CD4-positive, alpha-beta memory T cell (primary cell): ENCODE measurements at regions of chr2 and their contacts with region 1.

Region 1: DNA sequence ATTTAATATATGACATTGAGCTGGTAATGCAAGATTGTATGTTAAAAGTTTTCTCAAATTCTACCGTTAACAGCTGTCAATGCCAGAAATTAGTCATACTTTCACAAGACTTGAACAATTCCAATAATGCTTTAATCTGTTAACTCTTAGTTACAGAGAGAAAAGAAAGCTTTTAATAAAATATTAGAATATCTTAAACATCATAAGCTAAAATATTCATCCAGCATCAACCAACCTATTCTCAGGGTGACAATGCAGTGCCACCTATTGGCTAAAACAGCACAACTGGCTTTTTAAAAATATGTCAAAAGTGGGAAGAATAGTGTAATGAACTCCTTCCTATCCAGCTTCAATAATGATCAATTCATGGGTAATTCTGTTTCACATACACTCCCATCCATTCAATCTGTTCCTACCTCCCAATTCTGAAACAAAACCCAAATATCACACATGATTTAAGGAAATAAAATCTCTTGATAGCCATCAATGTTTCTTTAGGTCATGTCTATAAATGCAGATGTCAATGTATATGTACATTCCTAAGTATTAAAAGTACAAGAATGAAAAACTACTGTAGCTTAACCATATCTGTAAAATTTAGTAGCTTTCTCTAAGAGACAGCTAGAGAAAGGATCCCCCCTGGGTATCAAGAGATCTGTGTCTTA is 79.8 kb upstream of the CCDC141 start:
- DNase-seq: peak in 3 of 5 donors; percentile 11 to 13 (median 13)
- H3K4me3 ChIP-seq: no peak overlapping the region
- H3K4me3 Mint-ChIP-seq: no peak overlapping the region
- H3K27ac ChIP-seq: no peak overlapping the region
- H3K27ac Mint-ChIP-seq: peak overlapping the region in 1 of 7 donors; percentile 18
- H3K4me1 ChIP-seq: no peaks in the 10 kb centered on the region
- H3K4me1 Mint-ChIP-seq: no peaks in the 10 kb centered on the region
- H3K27me3 ChIP-seq: no peaks in the 10 kb centered on the region
- H3K27me3 Mint-ChIP-seq: no peaks in the 10 kb centered on the region

Region 2: DNA sequence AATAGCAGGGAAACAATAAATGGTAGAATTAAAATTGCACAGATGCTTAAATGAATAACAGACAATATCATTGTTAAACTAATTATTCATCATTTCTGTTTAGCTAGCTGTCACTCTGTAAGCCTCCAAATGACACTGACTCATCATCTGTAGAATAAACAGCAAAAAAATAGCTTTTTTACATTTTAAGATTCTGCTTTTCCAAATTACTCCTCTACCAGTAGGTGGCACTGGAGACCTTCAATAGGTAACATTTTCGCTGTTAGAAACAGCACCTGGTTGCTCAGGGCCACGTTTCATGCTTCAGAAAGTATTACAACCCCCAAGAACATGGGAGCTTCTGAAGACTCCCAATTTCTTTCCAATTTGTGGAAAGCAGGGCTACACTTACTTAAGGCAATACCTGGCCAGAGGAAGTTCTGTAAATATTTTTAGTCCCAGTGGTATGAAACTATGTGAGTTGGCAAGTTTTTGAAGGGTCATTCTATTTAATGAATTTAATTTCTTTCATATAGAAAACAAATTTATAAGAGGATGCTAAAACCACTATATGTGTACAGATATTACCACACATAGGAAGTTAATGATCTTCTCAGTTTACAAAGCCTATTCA is 367.8 kb before region 1 on chr2:
- CTCF ChIA-PET with region 1: interaction called, 10 read pairs
- POLR2A ChIA-PET with region 1: no interaction called
- intact Hi-C with region 1: no loop called
- DNase-seq: peak in 4 of 5 donors; percentile 20 to 31 (median 27)
- H3K4me3 ChIP-seq: no peak overlapping the region
- H3K4me3 Mint-ChIP-seq: no peak overlapping the region
- H3K27ac ChIP-seq: no peak overlapping the region
- H3K27ac Mint-ChIP-seq: no peak overlapping the region
- H3K4me1 ChIP-seq: no peaks in the 10 kb centered on the region
- H3K4me1 Mint-ChIP-seq: no peaks in the 10 kb centered on the region
- H3K27me3 ChIP-seq: no peaks in the 10 kb centered on the region
- H3K27me3 Mint-ChIP-seq: peaks cover 0 to 1% of the 10 kb centered on the region in 2 donors

Region 3: GRCh38 chr2:178796079-178796677 is 333.5 kb before region 1 on chr2:
- CTCF ChIA-PET with region 1: interaction called, 13 read pairs
- POLR2A ChIA-PET with region 1: no interaction called
- intact Hi-C with region 1: no loop called
- DNase-seq: peak in 4 of 5 donors; percentile 9 to 14 (median 12)
- H3K4me3 ChIP-seq: no peak overlapping the region
- H3K4me3 Mint-ChIP-seq: no peak overlapping the region
- H3K27ac ChIP-seq: no peak overlapping the region
- H3K27ac Mint-ChIP-seq: no peak overlapping the region
- H3K4me1 ChIP-seq: no peaks in the 10 kb centered on the region
- H3K4me1 Mint-ChIP-seq: no peaks in the 10 kb centered on the region
- H3K27me3 ChIP-seq: no peaks in the 10 kb centered on the region
- H3K27me3 Mint-ChIP-seq: peaks cover 0 to 3% of the 10 kb centered on the region in 2 donors

Region 4: GRCh38 chr2:178962805-178963433 is 166.8 kb before region 1 on chr2:
- CTCF ChIA-PET with region 1: interaction called, 5 read pairs
- POLR2A ChIA-PET with region 1: no interaction called
- intact Hi-C with region 1: loop called (anchors 2 kb)
- DNase-seq: no peak
- H3K4me3 ChIP-seq: no peak overlapping the region
- H3K4me3 Mint-ChIP-seq: no peak overlapping the region
- H3K27ac ChIP-seq: no peak overlapping the region
- H3K27ac Mint-ChIP-seq: no peak overlapping the region
- H3K4me1 ChIP-seq: no peaks in the 10 kb centered on the region
- H3K4me1 Mint-ChIP-seq: no peaks in the 10 kb centered on the region
- H3K27me3 ChIP-seq: no peaks in the 10 kb centered on the region
- H3K27me3 Mint-ChIP-seq: no peaks in the 10 kb centered on the region

Region 5: DNA sequence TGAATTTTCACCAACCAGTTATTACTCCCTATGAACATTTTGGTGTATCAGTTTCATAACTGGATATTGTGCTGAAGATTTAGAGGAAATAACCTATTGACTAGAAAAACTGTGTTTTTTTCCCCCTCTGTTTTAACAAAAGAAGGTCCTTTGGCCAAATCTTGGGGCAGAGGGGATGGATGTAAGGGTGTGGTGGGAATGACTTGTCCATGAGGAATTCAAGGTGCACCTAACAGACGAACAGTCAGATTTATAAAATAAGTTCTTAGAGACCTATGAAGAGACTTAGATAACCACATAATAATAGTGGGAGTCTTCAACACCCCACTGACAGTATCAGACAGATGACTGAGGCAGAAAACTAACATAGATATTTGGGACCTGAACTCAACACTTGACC is 254.3 kb after region 1 on chr2:
- CTCF ChIA-PET with region 1: no interaction called
- POLR2A ChIA-PET with region 1: no interaction called
- intact Hi-C with region 1: no loop called
- DNase-seq: no peak
- H3K4me3 ChIP-seq: no peak overlapping the region
- H3K4me3 Mint-ChIP-seq: no peak overlapping the region
- H3K27ac ChIP-seq: no peak overlapping the region
- H3K27ac Mint-ChIP-seq: no peak overlapping the region
- H3K4me1 ChIP-seq: no peaks in the 10 kb centered on the region
- H3K4me1 Mint-ChIP-seq: no peaks in the 10 kb centered on the region
- H3K27me3 ChIP-seq: no peaks in the 10 kb centered on the region
- H3K27me3 Mint-ChIP-seq: peaks cover 1 to 2% of the 10 kb centered on the region in 2 donors